Activated CD4-positive, alpha-beta T cell treated with anti-CD3 and anti-CD28 coated beads for 36 hours (primary cell): ENCODE measurements at regions of chr2 and their contacts with region 1.

Region 1: DNA sequence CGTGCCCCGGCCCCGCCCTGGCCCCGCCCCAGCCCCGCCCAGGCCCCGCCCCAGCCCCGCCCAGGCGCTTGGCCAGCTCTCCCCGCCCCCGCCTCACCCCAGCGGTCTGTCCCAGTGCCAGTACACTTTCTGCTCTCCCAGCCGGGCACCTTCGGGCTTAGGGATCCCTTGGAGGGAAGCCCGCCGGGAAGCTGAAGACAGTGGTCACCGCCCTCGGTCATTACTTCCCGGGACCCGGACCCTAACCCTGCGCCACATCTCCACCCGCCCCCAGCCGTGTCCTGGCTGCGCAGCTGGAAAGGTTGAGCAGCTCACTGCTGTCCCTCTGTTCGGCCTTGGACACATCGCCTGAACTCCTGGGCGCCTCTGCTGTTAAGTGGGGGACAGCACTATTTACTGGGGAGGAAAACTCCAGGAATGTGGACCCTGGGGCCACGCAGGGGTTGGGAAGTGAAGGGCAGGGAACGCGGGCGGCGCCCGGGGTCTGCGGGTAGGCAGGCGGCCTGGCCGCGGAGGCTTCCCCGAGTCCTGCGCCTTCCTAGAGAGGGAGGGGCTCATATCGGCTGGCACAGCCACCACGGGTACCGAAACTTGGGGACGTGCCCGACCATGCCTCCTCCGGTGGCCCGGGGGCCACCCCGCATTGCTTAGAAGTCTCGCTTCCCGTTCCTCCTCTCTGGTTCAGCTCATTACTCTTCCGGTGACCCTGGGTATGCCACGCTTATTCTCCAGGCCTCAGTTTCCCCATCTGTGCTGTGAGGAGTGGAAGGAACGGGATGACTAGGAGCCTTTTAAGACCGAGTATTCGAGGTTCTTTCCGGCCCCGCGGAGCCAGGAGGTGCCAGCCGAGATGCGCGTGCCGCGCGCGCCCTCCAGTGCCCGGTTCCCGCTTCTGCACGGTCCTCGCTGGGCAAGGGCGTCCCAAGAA is 121.0 kb downstream of the GYPC start:
- DNase-seq: peak; percentile 90
- ATAC-seq: peak; percentile 93
- H3K4me3 Mint-ChIP-seq: peak overlapping the region; percentile 77
- H3K27ac Mint-ChIP-seq: peak overlapping the region; percentile 44
- H3K4me1 Mint-ChIP-seq: no peaks in the 10 kb centered on the region
- H3K27me3 Mint-ChIP-seq: peaks cover 7% of the 10 kb centered on the region

Region 2: DNA sequence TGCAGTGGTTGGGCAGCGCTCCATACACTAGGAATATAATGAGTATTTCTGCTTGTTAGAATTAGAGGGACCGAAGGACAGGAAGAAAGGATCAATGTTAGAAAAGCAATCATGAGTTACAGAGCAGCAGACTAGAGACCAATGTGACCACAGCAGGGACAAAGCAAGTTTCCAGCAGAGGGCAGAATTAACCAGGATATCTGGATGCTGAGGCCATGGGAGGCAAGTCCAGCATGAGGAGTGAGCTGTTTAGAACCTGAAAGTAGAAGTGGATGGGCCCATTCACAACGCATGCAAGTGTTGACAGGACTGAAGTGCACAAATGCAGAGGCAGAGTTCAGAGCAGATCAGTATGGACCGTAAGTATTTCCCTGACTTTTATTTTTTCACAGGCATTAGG is 1031.4 kb before region 1 on chr2:
- CTCF ChIA-PET with region 1: no interaction called
- POLR2A ChIA-PET with region 1: no interaction called
- intact Hi-C with region 1: loop called in 1 of 2 experiments (anchors 2 kb)
- DNase-seq: peak; percentile 11
- ATAC-seq: no peak
- H3K4me3 Mint-ChIP-seq: no peak overlapping the region
- H3K27ac Mint-ChIP-seq: no peak overlapping the region
- H3K4me1 Mint-ChIP-seq: no peaks in the 10 kb centered on the region
- H3K27me3 Mint-ChIP-seq: no peaks in the 10 kb centered on the region

Region 3: DNA sequence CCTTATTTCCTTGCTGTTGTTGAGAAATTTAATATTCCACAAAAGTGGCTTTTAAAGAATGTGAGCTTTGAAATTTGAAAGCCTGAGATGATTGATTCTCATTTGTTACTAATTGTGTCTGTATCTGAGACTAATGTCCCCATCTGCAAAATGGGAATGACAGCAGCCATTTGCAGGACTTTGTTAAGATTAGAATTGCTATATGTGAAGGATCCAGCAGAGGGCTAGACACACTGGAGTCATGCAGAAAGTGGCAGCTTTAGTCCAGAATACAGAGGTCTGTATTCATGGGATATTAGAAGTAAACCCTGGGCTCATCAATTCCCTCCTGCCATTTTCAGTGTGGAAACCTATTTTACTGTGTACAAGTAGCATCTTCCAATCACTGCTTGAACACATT is 417.5 kb before region 1 on chr2:
- CTCF ChIA-PET with region 1: no interaction called
- POLR2A ChIA-PET with region 1: no interaction called
- intact Hi-C with region 1: loop called (anchors 1 to 2 kb)
- DNase-seq: no peak
- ATAC-seq: no peak
- H3K4me3 Mint-ChIP-seq: no peak overlapping the region
- H3K27ac Mint-ChIP-seq: no peak overlapping the region
- H3K4me1 Mint-ChIP-seq: no peaks in the 10 kb centered on the region
- H3K27me3 Mint-ChIP-seq: peaks cover 8% of the 10 kb centered on the region

Region 4: DNA sequence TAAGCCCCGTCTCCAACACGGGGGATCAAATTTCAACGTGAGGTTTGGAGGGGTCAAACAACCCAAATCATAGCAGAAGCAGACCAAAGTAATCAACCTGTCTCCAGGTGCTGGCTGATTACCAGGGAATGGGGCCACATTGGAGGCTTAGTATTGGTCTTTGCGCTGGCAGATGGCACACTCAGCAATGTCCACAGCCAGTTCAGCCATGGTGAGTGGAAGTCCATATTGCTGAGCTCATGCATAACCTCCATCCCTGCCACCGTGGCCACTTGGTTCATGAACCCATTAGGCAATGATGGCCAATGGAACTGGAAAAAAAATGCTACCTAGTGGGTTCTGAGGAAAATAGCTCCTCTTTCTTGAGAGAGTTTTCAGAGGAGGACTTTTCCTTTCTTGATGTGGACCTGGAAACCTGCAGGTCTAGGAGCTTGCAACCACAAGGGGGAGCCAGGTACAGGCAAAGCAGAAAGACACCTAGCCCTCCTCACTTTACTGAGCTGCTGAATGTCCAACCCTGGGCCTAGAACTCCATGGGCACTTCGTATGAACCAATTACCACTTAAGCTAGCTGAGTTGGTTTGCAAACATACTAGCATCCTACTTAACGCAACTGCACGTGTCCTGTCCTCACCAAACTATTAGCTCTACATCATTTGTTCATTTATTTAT is 249.0 kb before region 1 on chr2:
- CTCF ChIA-PET with region 1: interaction called, 74 read pairs
- POLR2A ChIA-PET with region 1: no interaction called
- intact Hi-C with region 1: loop called (anchors 1 kb)
- DNase-seq: peak; percentile 82
- ATAC-seq: peak; percentile 65
- H3K4me3 Mint-ChIP-seq: no peak overlapping the region
- H3K27ac Mint-ChIP-seq: no peak overlapping the region
- H3K4me1 Mint-ChIP-seq: no peaks in the 10 kb centered on the region
- H3K27me3 Mint-ChIP-seq: peaks cover 2% of the 10 kb centered on the region

Region 5: GRCh38 chr2:126971481-126972278 is 194.7 kb after region 1 on chr2:
- CTCF ChIA-PET with region 1: no interaction called
- POLR2A ChIA-PET with region 1: no interaction called
- intact Hi-C with region 1: loop called in 1 of 2 experiments (anchors 5 kb)
- DNase-seq: peak; percentile 82
- ATAC-seq: peak; percentile 95
- H3K4me3 Mint-ChIP-seq: no peak overlapping the region
- H3K27ac Mint-ChIP-seq: no peak overlapping the region
- H3K4me1 Mint-ChIP-seq: no peaks in the 10 kb centered on the region
- H3K27me3 Mint-ChIP-seq: peaks cover 35% of the 10 kb centered on the region